Activated naive CD8-positive, alpha-beta T cell treated with anti-CD3 and anti-CD28 coated beads, Interleukin-2, amount 10 ng/mL, durations not matched to agents 7 days and 5 days (primary cell): ENCODE measurements at regions of chr9 and their contacts with region 1.

Region 1: DNA sequence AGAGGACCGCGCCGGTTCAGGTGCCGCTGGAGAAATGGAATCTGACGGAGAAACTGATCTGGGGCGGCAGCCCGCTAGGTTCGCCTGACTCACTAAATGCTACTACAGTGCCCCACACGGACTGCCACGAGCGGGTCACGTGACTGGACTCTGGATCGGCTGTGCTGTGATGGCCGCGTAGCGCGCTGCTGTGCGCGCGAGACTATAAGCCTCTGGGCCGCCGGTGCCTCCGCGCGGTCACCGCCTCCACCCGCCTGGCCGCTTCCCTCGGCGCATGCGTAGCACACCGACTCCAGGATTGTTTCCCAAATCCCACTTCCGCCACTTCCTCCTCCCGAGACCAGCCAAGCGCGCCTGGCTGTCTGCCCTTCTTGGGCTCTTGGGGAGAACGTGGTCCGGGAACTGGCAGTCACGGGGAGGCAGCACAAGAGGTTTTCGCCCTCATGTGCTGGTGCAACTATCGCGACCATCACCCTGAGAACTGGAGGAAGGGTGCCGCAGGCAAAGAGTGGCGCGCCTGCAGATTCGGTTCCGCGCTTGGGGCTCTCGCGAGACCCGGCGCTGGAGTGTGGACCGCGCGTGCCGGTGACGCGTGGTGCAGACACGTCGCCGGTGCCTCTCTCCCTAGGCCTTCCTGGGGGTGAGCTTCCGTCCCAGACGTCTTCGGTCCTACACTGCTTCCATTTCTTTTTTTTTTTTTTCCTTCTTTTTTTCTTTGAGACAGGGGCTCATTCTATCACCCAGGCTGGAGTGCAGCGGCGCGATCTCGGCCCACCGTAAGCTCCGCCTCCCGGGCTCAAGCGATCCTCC is 35.8 kb upstream of the GLDC start:
- DNase-seq: peak; percentile 90
- ATAC-seq: peak; percentile 92
- H3K4me3 Mint-ChIP-seq: peak overlapping the region; percentile 91
- H3K27ac Mint-ChIP-seq: peak overlapping the region; percentile 99
- H3K4me1 Mint-ChIP-seq: peaks cover 17% of the 10 kb centered on the region
- H3K27me3 Mint-ChIP-seq: no peaks in the 10 kb centered on the region

Region 2: GRCh38 chr9:6715755-6716643 is 34.6 kb after region 1 on chr9:
- POLR2A ChIA-PET with region 1: interaction called, 29 read pairs
- DNase-seq: peak; percentile 83
- ATAC-seq: peak; percentile 93
- H3K4me3 Mint-ChIP-seq: peak overlapping the region; percentile 85
- H3K27ac Mint-ChIP-seq: peak overlapping the region; percentile 92
- H3K4me1 Mint-ChIP-seq: peaks cover 6% of the 10 kb centered on the region
- H3K27me3 Mint-ChIP-seq: no peaks in the 10 kb centered on the region